OCI-LY7 (cell line): ENCODE measurements at regions of chr1 and their contacts with region 1.

Region 1: DNA sequence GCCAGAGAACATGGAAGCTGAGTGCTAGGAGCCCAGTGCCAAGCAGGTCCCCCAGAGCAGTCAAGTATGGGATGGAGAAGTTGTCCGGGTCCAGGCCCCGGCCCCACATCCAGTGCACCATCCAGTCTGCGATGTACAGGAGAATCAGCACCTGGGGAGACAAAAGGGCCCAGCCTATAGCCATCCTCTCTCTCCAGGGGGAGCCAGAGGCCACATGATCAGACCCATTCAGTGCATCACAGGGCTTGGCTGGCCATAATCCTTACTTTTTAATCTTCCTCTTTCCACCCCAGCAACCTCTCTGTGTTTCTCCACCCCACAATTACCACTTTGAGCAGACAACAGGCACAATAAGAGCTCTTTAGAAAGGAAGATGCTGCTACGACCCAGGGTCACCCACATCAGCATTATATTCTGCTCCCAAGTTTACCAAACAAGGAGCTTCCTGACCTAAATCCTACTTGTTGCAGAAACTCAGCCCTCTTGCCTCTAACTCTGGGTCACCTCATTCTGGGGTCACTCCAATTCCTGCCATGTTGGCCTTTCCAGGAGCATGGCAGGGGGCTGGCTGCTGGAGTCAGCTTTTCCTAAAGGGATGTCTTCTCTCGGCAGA is 16.4 kb upstream of the RAB29 start:
- DNase-seq: peak; percentile 70
- H3K4me3 ChIP-seq: no peak overlapping the region
- H3K27ac ChIP-seq: no peak overlapping the region
- H3K4me1 ChIP-seq: peaks cover 18% of the 10 kb centered on the region
- CTCF ChIP-seq: peak; percentile 93

Region 2: GRCh38 chr1:205689479-205689878 is 102.2 kb before region 1 on chr1:
- CTCF ChIA-PET with region 1: no interaction called
- POLR2A ChIA-PET with region 1: no interaction called
- intact Hi-C with region 1: no loop called
- DNase-seq: no peak
- H3K4me3 ChIP-seq: no peak overlapping the region
- H3K27ac ChIP-seq: no peak overlapping the region
- H3K4me1 ChIP-seq: peaks cover 7% of the 10 kb centered on the region
- CTCF ChIP-seq: no peak

Region 3: DNA sequence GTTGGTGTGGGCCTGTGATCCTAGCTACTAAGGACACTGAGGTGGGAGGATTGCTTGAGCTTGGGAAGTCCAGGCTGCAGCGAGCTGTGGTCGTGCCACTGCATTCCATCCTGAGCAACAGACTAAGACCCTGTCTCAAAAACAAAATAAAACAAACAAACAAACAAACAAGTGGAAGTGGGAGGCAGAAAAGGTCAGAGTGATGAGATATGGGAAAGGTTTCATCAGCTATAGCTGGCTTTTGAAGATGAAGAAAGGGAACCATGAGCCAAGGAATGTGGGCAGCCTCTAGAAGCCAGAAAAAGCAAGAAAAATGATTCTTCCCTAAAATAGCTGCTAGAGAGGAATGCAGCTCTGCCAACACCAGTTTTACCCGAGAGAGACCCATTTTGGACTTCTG is 31.1 kb before region 1 on chr1:
- CTCF ChIA-PET with region 1: no interaction called
- POLR2A ChIA-PET with region 1: no interaction called
- intact Hi-C with region 1: no loop called
- DNase-seq: no peak
- H3K4me3 ChIP-seq: no peak overlapping the region
- H3K27ac ChIP-seq: no peak overlapping the region
- H3K4me1 ChIP-seq: no peaks in the 10 kb centered on the region
- CTCF ChIP-seq: no peak

Region 4: GRCh38 chr1:205858141-205858961 is 66.7 kb after region 1 on chr1:
- CTCF ChIA-PET with region 1: no interaction called
- POLR2A ChIA-PET with region 1: no interaction called
- intact Hi-C with region 1: loop called (anchors 5 kb)
- DNase-seq: peak; percentile 38
- H3K4me3 ChIP-seq: peak overlapping the region; percentile 8
- H3K27ac ChIP-seq: no peak overlapping the region
- H3K4me1 ChIP-seq: peaks cover 14% of the 10 kb centered on the region
- CTCF ChIP-seq: peak; percentile 49

Region 5: GRCh38 chr1:205907794-205908193 is 116.1 kb after region 1 on chr1:
- CTCF ChIA-PET with region 1: interaction called, 4 read pairs
- POLR2A ChIA-PET with region 1: no interaction called
- intact Hi-C with region 1: loop called (anchors 1 kb)
- DNase-seq: peak; percentile 10
- H3K4me3 ChIP-seq: no peak overlapping the region
- H3K27ac ChIP-seq: no peak overlapping the region
- H3K4me1 ChIP-seq: no peaks in the 10 kb centered on the region
- CTCF ChIP-seq: peak; percentile 70

Region 6: DNA sequence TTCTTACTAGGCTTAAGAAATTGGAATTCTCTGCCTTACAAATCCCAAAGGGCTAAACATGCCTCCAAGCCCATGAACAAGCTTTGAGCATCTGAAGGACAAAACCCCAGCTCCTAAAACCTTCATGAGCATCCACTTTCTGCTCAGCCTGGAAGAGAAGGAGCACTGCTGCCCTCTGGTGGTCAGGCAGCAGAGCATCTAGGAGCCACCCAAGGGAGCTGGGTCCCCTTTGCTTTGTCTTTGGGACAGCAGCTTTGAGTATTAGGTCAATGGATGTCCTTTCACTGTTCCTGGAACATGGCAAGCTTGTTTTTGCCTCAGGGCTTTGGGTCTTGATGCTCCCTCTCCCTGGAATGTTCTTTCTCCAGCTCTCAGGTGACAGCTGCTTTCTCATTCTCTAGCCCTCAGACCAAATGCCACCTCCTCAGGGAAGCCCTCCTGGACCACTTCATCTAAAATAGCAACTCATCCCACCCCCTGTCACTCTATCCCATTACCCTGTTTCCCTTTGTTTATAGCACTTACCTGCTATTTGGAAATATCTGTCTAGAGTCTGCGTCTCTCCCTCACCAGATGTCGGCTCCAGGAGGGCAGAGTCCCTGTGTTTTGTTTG is 185.8 kb after region 1 on chr1:
- CTCF ChIA-PET with region 1: interaction called, 5 read pairs
- POLR2A ChIA-PET with region 1: interaction called, 3 read pairs
- intact Hi-C with region 1: loop called (anchors 1 kb)
- DNase-seq: peak; percentile 83
- H3K4me3 ChIP-seq: no peak overlapping the region
- H3K27ac ChIP-seq: no peak overlapping the region
- H3K4me1 ChIP-seq: no peaks in the 10 kb centered on the region
- CTCF ChIP-seq: peak; percentile 98